OCI-LY7 (cell line): ENCODE measurements at regions of chr4 and their contacts with region 1.

Region 1: DNA sequence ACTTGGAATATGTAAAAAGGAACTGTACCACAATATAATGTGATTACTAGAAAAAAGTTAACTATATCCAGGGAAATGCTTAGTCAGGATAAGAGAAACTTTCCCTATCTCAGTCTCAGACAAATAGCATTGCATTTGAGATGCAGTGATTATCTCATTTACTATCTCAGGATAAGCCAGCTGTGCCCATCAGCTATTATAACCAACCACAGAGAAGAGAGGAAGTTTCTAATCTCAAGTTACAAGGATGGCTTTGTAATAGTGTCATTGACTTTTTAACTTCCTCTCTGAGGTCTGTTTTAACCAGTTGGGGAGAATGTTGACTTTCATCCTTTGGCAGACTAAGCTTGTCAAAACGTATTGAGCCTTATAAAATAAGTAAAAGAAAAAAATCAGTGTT is 56.5 kb downstream of the SNX25 start:
- DNase-seq: peak; percentile 75
- H3K4me3 ChIP-seq: no peak overlapping the region
- H3K27ac ChIP-seq: peak overlapping the region; percentile 79
- H3K4me1 ChIP-seq: peaks cover 64% of the 10 kb centered on the region
- CTCF ChIP-seq: no peak

Region 2: GRCh38 chr4:184408021-184408710 is 857.8 kb before region 1 on chr4:
- CTCF ChIA-PET with region 1: no interaction called
- POLR2A ChIA-PET with region 1: no interaction called
- intact Hi-C with region 1: no loop called
- DNase-seq: no peak
- H3K4me3 ChIP-seq: no peak overlapping the region
- H3K27ac ChIP-seq: no peak overlapping the region
- H3K4me1 ChIP-seq: peaks cover 37% of the 10 kb centered on the region
- CTCF ChIP-seq: no peak

Region 3: GRCh38 chr4:185209031-185209851 is 56.7 kb before region 1 on chr4 and contains the start of gene SNX25:
- CTCF ChIA-PET with region 1: interaction called, 3 read pairs
- POLR2A ChIA-PET with region 1: interaction called, 9 read pairs
- intact Hi-C with region 1: loop called (anchors 2 kb)
- DNase-seq: peak; percentile 91
- H3K4me3 ChIP-seq: peak within 1 kb of the TSS; percentile 81
- H3K27ac ChIP-seq: peak within 1 kb of the TSS; percentile 80
- H3K4me1 ChIP-seq: peaks cover 57% of the 10 kb centered on the region
- CTCF ChIP-seq: peak; percentile 33
- total RNA-seq, gene SNX25: 33.7 and 35.5 TPM in 2 replicates

Region 4: DNA sequence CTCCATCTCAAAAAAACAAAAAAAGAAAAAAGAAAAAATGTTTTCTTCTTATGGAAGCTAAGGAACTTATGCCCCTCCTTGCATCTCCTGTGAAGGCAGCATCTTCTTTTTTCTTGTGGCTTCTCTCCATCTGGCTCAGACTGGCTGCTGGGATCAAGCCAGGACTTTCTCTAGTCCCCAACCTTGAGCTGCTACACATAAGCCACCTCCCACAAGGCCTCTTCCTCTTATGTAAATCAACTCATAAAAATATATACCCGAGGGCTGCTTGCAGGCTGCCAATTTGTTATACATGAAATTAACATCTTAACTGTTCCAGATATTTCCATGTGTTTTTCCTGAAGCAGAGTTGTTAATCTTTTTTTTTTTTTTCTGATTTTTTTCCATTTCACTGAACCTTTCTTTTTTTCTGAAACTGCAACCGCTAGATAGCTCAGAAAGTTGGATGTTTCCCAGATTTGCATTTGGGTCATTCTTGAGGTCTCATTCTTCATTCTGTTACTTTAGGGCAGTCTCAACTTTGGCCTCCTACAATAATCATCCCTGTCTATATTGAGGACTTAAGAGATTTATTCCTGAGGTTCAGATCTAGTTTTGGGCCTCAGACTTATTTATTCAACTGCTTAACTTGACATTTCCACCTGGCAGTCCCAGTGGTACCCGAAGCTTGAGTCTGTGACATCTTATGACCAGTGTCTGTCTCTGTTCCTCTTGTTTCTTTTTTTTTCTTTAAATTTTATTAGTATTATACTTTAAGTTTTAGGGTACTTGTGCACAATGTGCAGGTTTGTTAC is 46.2 kb before region 1 on chr4:
- CTCF ChIA-PET with region 1: no interaction called
- POLR2A ChIA-PET with region 1: interaction called, 12 read pairs
- intact Hi-C with region 1: loop called (anchors 2 kb)
- DNase-seq: peak; percentile 65
- H3K4me3 ChIP-seq: peak overlapping the region; percentile 57
- H3K27ac ChIP-seq: peak overlapping the region; percentile 68
- H3K4me1 ChIP-seq: peaks cover 58% of the 10 kb centered on the region
- CTCF ChIP-seq: no peak